ENCODE measurements at regions of chr4 and their contacts with region 1.

Region 1: DNA sequence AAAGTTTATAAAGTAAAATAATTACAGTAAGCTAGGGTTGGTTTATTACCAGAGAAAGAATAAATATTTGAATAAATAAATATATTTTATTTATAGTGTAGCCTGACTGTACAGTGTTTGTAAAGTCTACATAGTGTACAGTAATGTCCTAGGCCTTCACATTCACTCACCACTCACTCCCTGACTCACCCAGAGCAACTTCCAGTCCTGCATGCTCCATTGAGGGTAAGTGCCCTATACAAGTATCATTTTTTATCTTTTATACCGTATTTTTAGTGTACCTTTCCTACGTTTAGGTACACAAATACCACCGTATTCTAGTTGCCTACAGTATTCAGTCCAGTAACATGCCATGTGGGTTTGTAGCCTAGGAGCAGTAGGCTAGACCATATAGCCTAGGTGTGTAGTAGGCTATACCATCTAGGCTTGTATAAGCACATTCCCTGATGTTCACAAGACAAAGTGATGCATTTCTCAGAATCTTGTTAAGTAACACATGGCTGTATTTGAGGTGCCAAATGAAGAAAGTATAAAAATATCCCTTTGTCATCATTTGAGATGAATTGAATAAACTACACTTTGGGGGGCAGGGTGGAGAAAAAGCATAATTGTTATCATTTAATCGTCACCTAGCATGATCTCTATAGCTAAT is 14.7 kb upstream of the KLHL8 start:
- DNase-seq: no peak
- H3K4me3 Mint-ChIP-seq: peak overlapping the region; percentile 77
- H3K27ac Mint-ChIP-seq: no peak overlapping the region
- H3K4me1 Mint-ChIP-seq: peaks cover 5% of the 10 kb centered on the region
- H3K27me3 Mint-ChIP-seq: peaks cover 22% of the 10 kb centered on the region

Region 2: GRCh38 chr4:86497980-86498862 is 736.9 kb before region 1 on chr4:
- intact Hi-C with region 1: loop called (anchors 10 kb)
- DNase-seq: no peak
- H3K4me3 Mint-ChIP-seq: no peak overlapping the region
- H3K27ac Mint-ChIP-seq: no peak overlapping the region
- H3K4me1 Mint-ChIP-seq: peaks cover 9% of the 10 kb centered on the region
- H3K27me3 Mint-ChIP-seq: peaks cover 13% of the 10 kb centered on the region

Region 3: GRCh38 chr4:86924811-86925210 is 310.3 kb before region 1 on chr4:
- intact Hi-C with region 1: loop called (anchors 1 kb)
- DNase-seq: no peak
- H3K4me3 Mint-ChIP-seq: no peak overlapping the region
- H3K27ac Mint-ChIP-seq: no peak overlapping the region
- H3K4me1 Mint-ChIP-seq: peaks cover 19% of the 10 kb centered on the region
- H3K27me3 Mint-ChIP-seq: no peaks in the 10 kb centered on the region

Region 4: DNA sequence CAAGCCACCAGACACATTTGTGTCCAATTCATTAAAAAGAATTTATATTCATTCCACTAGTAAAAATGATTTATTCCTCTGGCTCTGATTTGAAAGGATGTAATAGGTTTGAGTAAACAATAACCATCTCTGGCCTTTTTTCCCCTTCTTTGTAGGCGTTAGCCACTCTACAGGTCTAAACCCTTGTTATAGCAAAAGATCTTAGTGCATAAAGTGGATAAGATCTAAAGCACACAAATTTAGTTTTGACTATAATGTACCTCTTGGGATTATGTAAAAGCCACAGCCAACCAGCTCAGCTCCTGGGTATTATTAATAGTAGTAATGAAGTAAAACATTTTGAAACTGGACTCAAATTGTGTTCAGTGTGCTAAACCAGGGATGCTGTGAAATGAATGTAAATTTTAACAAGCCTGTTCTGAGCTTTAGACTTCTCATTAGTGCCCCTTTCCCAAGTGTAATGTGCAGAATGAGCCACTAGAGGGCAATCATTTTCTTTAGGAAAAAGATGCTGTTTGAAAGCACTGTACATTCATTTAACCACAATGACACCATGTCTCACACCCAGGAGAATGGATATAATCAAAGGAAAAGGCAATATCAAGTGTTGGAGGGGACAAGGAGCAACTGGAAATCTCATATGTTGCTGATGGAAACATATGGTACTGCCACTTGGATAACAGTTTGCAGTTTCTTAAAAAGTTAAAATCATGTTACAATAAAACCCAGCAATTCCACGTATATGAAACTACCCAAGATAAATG is 84.5 kb before region 1 on chr4:
- intact Hi-C with region 1: loop called (anchors 1 kb)
- DNase-seq: peak; percentile 15
- H3K4me3 Mint-ChIP-seq: no peak overlapping the region
- H3K27ac Mint-ChIP-seq: no peak overlapping the region
- H3K4me1 Mint-ChIP-seq: peaks cover 3% of the 10 kb centered on the region
- H3K27me3 Mint-ChIP-seq: no peaks in the 10 kb centered on the region

Region 5: DNA sequence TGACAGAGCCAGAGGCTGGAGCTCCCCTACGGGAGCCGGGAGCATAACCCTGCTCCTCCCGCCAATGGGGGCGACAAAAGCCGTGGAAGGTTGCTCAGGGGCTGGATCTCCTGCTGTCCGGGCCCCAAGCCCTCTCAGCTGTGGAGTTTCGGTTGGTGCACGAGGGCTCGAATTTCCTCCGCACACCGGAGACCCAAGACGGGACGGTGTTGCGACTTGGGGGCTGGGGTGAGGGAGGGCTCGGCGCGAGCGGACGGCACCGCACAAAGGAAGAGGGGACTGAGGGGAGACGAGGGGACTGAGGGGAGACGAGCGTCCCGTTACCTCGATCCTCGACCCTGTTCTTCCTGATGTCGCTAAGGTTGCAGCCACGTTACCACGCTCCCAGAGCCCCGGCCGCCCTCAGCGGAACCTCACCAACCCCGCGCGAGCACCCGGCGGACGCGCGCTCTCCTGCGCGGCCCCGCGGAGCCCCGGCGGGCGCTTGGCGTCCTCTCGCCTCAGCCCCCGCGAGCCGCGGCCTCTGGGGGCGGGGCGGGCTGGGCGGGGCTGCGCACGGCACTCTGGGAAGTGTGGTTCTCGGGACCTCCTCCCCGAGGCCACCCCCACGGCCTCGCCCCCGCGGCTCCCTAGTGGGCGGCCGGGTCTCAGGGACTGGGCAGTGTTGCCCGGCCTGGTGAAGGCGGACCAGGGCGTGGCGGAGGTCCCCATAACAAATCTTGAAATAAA is 14.9 kb before region 1 on chr4 and contains the start of gene KLHL8:
- intact Hi-C with region 1: loop called (anchors 2 kb)
- DNase-seq: peak; percentile 85
- H3K4me3 Mint-ChIP-seq: peak within 1 kb of the TSS; percentile 89
- H3K27ac Mint-ChIP-seq: peak within 1 kb of the TSS; percentile 82
- H3K4me1 Mint-ChIP-seq: peaks cover 19% of the 10 kb centered on the region
- H3K27me3 Mint-ChIP-seq: peaks cover 11% of the 10 kb centered on the region
- total RNA-seq, gene KLHL8: 11.6 and 12.3 TPM in 2 replicates

Region 6: DNA sequence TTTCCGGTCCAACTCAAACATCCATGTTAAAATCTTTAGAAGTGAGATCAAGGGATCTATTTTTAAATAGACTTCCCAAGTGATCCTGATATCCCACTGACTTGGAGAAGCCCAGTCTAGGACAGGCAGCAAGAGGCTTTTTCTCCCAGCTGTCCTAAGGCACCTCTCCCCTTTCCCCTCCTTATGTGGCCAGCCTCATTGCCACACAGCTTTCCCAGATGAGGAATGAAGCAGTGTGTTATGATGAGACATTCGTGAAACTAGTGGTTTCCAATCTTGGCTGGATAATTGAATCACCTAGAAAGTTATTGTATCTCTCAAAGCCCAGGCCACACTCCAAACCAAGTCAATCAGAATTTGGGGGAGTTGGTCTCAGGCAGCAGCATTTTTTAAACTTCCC is 104.3 kb after region 1 on chr4:
- intact Hi-C with region 1: no loop called
- DNase-seq: no peak
- H3K4me3 Mint-ChIP-seq: no peak overlapping the region
- H3K27ac Mint-ChIP-seq: no peak overlapping the region
- H3K4me1 Mint-ChIP-seq: no peaks in the 10 kb centered on the region
- H3K27me3 Mint-ChIP-seq: no peaks in the 10 kb centered on the region